Naive thymus-derived CD4-positive, alpha-beta T cell (primary cell): ENCODE measurements at regions of chr21 and their contacts with region 1.

Region 1: GRCh38 chr21:15483138-15483780 is 246.5 kb upstream of the USP25 start:
- DNase-seq: peak; percentile 33 to 75 (median 69)
- ATAC-seq: peak; percentile 99
- H3K4me3 ChIP-seq: no peak overlapping the region
- H3K4me3 Mint-ChIP-seq: peak overlapping the region in 6 of 10 donors; percentile 18 to 59 (median 37)
- H3K27ac ChIP-seq: no peak overlapping the region
- H3K27ac Mint-ChIP-seq: peak overlapping the region in 2 of 9 donors; percentile 2 to 57
- H3K4me1 ChIP-seq: no peaks in the 10 kb centered on the region
- H3K4me1 Mint-ChIP-seq: peaks cover 3 to 37% (median 25%) of the 10 kb centered on the region in 7 donors
- H3K27me3 ChIP-seq: no peaks in the 10 kb centered on the region
- H3K27me3 Mint-ChIP-seq: peaks cover 0 to 3% (median 0%) of the 10 kb centered on the region in 5 donors

Region 2: DNA sequence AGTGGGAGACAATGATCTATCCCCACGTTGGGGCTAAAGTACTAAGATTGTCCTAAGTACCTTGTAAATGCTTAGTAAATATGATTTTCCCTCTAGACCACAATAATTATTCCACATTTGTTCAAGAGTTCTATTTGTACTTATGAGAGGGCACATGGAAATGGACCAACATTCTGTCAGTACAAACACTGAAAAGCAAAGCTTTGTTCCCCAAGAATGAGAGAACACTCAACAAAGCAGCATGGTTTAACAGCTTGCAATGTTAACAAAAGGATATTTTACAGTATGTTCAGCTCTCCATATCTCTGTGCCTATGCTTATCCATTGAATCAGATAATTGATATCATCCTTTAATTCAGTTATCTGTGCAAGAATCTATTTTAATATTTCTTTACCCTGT is 1231.9 kb before region 1 on chr21:
- CTCF ChIA-PET with region 1: no interaction called
- POLR2A ChIA-PET with region 1: no interaction called
- intact Hi-C with region 1: loop called in 1 of 2 experiments (anchors 1 kb)
- DNase-seq: no peak
- ATAC-seq: no peak
- H3K4me3 ChIP-seq: no peak overlapping the region
- H3K4me3 Mint-ChIP-seq: no peak overlapping the region
- H3K27ac ChIP-seq: no peak overlapping the region
- H3K27ac Mint-ChIP-seq: no peak overlapping the region
- H3K4me1 ChIP-seq: no peaks in the 10 kb centered on the region
- H3K4me1 Mint-ChIP-seq: peaks cover 3 to 9% (median 5%) of the 10 kb centered on the region in 7 donors
- H3K27me3 ChIP-seq: peaks cover 0 to 5% of the 10 kb centered on the region in 2 donors
- H3K27me3 Mint-ChIP-seq: peaks cover 5 to 23% (median 13%) of the 10 kb centered on the region in 5 donors

Region 3: DNA sequence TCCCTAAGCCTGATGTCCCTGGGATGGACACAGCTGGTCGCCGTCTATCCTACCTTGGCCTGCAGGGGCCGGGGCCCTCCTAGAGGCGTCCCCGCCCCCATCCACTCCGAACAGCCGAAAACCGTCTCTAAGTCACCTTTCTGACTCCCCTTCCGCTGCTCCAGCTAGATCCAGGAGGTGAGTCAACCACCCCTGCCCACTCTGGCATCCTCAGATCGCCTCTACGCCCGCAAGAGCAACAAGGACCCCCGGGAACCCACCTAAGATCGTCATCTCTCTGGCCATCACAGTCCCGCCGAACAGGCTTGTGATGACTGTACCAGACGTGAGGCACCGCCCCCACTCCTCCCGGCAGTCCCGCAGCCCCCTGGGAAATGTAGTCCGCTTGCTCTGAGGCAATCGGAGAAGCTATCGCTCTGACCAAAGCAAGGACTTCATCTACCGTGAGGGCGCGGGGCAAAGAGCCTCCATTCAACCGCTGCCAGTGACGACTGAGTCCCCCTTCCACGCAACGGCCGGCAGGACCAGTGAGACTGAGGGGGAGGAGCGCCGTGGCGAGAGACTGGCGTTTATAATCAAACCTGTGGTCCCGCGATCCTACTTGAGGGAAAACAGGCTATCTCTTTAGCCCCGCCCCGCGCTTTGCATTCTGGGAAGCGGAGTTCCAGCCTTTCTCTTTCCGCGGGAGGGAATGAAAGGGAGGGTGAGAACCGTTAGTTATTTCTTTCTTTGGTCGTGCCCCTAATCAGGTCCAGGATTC is 1100.2 kb before region 1 on chr21 and contains the start of gene HSPA13:
- CTCF ChIA-PET with region 1: interaction called, 5 read pairs
- POLR2A ChIA-PET with region 1: no interaction called
- intact Hi-C with region 1: loop called in 1 of 2 experiments (anchors 5 kb)
- DNase-seq: peak; percentile 88 to 99 (median 99)
- ATAC-seq: peak; percentile 97
- H3K4me3 ChIP-seq: peak within 1 kb of the TSS; percentile 93
- H3K4me3 Mint-ChIP-seq: peak within 1 kb of the TSS; percentile 93 to 100 (median 100)
- H3K27ac ChIP-seq: peak within 1 kb of the TSS; percentile 91
- H3K27ac Mint-ChIP-seq: peak within 1 kb of the TSS; percentile 93 to 100 (median 98)
- H3K4me1 ChIP-seq: peaks cover 8 to 25% of the 10 kb centered on the region in 2 donors
- H3K4me1 Mint-ChIP-seq: peaks cover 13 to 44% (median 41%) of the 10 kb centered on the region in 7 donors
- H3K27me3 ChIP-seq: no peaks in the 10 kb centered on the region
- H3K27me3 Mint-ChIP-seq: peaks cover 0 to 2% (median 0%) of the 10 kb centered on the region in 5 donors
- total RNA-seq, gene HSPA13: 16.9 to 38.1 (median 26.7) TPM

Region 4: DNA sequence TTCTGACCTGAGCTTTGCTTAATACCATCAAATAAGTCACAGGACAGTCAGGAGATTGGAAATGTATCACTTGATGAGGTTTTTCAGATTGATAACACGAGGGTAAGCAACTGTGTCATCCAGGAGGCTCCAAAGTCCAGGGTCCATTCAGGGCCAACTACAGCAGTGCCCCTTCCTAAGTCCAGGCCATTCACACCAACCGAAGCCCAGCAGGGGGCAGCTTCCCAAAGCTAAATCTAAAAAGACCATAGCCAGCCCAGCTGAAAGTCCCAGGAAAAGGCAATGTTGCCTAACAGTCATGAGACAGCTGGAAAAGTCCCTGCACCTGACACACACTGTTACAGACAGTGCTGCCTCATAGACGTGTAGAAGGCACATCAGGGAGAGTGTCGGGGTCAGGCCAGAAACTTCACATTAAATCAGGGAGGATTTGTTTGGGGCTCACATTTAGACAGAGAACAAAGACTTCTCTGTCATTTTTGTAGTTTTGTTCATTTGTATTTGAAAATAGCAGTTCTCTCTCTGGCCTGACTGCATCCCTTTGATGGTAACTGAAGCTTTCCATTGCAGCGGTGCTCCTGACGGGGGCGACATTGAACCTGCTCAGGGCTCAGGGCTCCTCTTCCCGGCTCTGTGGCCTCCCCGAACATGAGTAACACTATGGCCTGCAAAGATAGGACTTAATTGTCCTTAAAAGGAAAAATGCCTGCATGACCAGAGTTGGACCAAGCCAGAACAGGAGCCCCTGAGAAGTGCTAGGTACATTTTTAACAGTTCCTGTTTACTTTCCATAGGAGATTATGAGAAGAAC is 618.8 kb before region 1 on chr21:
- CTCF ChIA-PET with region 1: interaction called, 4 read pairs
- POLR2A ChIA-PET with region 1: no interaction called
- intact Hi-C with region 1: loop called (anchors 1 kb)
- DNase-seq: peak in 7 of 9 donors; percentile 13 to 31 (median 24)
- ATAC-seq: peak; percentile 72
- H3K4me3 ChIP-seq: no peak overlapping the region
- H3K4me3 Mint-ChIP-seq: no peak overlapping the region
- H3K27ac ChIP-seq: no peak overlapping the region
- H3K27ac Mint-ChIP-seq: no peak overlapping the region
- H3K4me1 ChIP-seq: no peaks in the 10 kb centered on the region
- H3K4me1 Mint-ChIP-seq: peaks cover 0 to 12% (median 3%) of the 10 kb centered on the region in 7 donors
- H3K27me3 ChIP-seq: no peaks in the 10 kb centered on the region
- H3K27me3 Mint-ChIP-seq: peaks cover 0 to 5% (median 0%) of the 10 kb centered on the region in 5 donors

Region 5: DNA sequence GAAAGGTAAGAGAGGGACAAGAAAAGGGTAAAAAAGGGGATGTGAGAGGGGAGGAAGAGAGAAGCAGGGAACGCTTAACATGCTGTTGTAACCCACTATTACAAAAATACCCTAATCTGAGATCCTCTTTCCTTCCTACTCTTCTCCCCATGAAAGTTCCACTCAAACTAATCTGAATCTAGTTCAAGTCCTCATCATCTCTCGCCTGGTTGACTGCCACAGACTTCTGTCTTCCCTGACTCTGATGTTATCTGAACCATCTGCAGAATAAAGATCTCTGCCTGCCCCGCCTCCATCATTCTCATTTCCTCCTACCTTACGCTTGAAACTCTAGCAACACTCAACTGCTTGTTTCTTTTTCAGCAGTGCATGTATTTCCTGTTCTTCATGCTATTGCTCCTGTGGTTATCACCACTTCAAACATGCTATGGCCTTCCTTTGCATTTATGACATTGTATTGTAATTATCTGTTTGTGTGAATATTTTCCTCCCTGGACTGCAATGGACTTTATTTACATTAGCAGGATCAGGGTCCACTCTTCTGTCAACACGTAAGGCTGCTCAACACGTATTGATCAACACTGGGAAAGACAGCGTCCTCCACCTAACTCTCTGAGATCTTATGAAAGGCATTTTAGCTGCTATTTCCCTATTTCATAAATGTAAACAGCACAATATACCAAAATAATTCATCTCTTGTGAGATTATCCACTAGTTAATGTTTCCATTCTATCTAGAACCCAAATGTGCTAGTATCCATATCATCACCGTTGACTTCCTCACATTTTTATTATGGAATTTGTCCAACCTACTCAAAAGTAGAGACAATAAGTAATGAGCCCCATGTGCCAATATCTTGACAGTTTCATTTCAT is 31.1 kb after region 1 on chr21:
- CTCF ChIA-PET with region 1: interaction called, 4 read pairs
- POLR2A ChIA-PET with region 1: interaction called, 4 read pairs
- intact Hi-C with region 1: loop called (anchors 1 to 2 kb)
- DNase-seq: peak in 8 of 9 donors; percentile 34 to 87 (median 82)
- ATAC-seq: peak; percentile 99
- H3K4me3 ChIP-seq: peak overlapping the region; percentile 23
- H3K4me3 Mint-ChIP-seq: peak overlapping the region; percentile 59 to 76 (median 69)
- H3K27ac ChIP-seq: peak overlapping the region; percentile 46
- H3K27ac Mint-ChIP-seq: peak overlapping the region; percentile 75 to 94 (median 87)
- H3K4me1 ChIP-seq: peaks cover 12 to 32% of the 10 kb centered on the region in 2 donors
- H3K4me1 Mint-ChIP-seq: peaks cover 16 to 54% (median 31%) of the 10 kb centered on the region in 7 donors
- H3K27me3 ChIP-seq: no peaks in the 10 kb centered on the region
- H3K27me3 Mint-ChIP-seq: no peaks in the 10 kb centered on the region

Region 6: DNA sequence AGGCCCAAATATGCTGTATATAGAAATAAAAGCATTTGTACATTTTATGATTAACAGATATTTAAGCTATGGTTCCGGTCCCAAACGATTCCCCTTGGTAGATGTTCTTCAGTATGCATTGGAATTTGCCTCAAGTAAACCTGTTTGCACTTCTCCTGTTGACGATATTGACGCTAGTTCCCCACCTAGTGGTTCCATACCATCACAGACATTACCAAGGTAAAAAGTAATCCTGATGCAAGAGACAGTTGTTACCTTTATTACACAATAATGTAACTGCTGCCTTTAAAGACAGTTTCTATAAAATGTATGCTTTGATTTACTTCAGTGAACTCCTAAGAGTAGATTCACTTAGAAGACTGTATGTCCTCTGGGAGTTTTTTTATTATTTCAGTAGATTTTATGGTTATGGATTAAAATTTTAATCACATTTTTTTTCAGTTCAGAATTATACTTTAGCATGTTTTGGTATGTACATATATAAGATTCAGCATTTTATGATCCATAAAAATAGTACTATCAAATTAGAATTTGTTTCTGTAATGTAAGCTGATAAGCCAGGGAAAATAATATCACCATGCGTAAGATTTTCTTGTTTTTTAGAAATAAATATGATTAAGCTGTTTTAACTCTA is 343.0 kb after region 1 on chr21:
- CTCF ChIA-PET with region 1: no interaction called
- POLR2A ChIA-PET with region 1: no interaction called
- intact Hi-C with region 1: loop called in 1 of 2 experiments (anchors 2 kb)
- DNase-seq: peak in 7 of 9 donors; percentile 6 to 51 (median 31)
- ATAC-seq: peak; percentile 68
- H3K4me3 ChIP-seq: no peak overlapping the region
- H3K4me3 Mint-ChIP-seq: peak overlapping the region in 2 of 10 donors; percentile 1 to 6
- H3K27ac ChIP-seq: no peak overlapping the region
- H3K27ac Mint-ChIP-seq: peak overlapping the region in 4 of 9 donors; percentile 1 to 56 (median 36)
- H3K4me1 ChIP-seq: peaks cover 18 to 21% of the 10 kb centered on the region in 2 donors
- H3K4me1 Mint-ChIP-seq: peaks cover 18 to 54% (median 47%) of the 10 kb centered on the region in 7 donors
- H3K27me3 ChIP-seq: no peaks in the 10 kb centered on the region
- H3K27me3 Mint-ChIP-seq: no peaks in the 10 kb centered on the region